Aorta (tissue), 5 donors: ENCODE measurements at regions of chr16 and their contacts with region 1.

Region 1: GRCh38 chr16:66608241-66609138 is 4.0 kb downstream of the CMTM3 start:
- DNase-seq: peak; percentile 90 to 96
- ATAC-seq: peak; percentile 69
- H3K4me3 ChIP-seq: no peak overlapping the region
- H3K27ac ChIP-seq: no peak overlapping the region
- H3K4me1 ChIP-seq: no peaks in the 10 kb centered on the region
- H3K27me3 ChIP-seq: no peaks in the 10 kb centered on the region

Region 2: GRCh38 chr16:66366433-66367299 is 241.8 kb before region 1 on chr16 and contains the start of gene CDH5:
- intact Hi-C with region 1: no loop called
- DNase-seq: peak in 1 of 2 donors; percentile 82
- ATAC-seq: peak; percentile 79
- H3K4me3 ChIP-seq: no peak within 1 kb of the TSS
- H3K27ac ChIP-seq: no peak within 1 kb of the TSS
- H3K4me1 ChIP-seq: no peaks in the 10 kb centered on the region
- H3K27me3 ChIP-seq: no peaks in the 10 kb centered on the region
- total RNA-seq, gene CDH5: 38.2 to 97.5 TPM

Region 3: DNA sequence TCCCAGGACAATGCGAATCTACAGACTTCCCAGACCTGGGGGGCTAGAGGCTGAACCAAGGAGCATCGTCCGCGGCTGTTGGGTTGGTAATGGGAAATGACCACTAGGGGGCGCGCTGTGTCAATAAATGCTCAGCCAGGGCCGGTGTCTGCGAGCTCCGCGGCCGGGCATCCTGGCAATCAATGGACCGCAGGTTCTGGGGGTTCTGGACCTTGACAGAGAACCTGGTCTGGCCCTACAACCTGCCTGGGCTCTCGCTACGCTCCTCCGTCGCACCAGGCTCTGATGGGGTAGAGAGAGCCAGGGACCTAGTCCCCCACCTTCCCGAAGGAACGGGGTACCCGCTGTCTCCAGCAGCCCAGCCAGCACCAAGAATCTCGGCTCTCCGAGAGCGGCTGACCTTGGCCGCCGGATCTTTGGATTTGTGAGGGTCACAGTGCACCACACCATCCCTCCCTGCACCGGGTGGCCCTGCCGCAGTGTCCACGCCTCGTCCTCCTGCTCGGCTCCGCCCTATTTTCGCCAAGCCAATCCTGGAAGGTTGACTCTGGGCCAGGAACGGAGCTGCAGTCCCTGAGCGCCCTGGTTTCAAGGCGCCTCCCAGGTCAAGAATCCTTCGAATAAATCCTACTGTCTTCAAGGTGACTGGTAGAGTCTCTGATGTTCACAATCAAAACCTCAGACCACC is 201.8 kb before region 1 on chr16:
- intact Hi-C with region 1: loop called (anchors 5 kb)
- DNase-seq: peak; percentile 89 to 96
- ATAC-seq: peak; percentile 94
- H3K4me3 ChIP-seq: peak overlapping the region in 1 of 2 donors; percentile 45
- H3K27ac ChIP-seq: no peak overlapping the region
- H3K4me1 ChIP-seq: no peaks in the 10 kb centered on the region
- H3K27me3 ChIP-seq: no peaks in the 10 kb centered on the region

Region 4: DNA sequence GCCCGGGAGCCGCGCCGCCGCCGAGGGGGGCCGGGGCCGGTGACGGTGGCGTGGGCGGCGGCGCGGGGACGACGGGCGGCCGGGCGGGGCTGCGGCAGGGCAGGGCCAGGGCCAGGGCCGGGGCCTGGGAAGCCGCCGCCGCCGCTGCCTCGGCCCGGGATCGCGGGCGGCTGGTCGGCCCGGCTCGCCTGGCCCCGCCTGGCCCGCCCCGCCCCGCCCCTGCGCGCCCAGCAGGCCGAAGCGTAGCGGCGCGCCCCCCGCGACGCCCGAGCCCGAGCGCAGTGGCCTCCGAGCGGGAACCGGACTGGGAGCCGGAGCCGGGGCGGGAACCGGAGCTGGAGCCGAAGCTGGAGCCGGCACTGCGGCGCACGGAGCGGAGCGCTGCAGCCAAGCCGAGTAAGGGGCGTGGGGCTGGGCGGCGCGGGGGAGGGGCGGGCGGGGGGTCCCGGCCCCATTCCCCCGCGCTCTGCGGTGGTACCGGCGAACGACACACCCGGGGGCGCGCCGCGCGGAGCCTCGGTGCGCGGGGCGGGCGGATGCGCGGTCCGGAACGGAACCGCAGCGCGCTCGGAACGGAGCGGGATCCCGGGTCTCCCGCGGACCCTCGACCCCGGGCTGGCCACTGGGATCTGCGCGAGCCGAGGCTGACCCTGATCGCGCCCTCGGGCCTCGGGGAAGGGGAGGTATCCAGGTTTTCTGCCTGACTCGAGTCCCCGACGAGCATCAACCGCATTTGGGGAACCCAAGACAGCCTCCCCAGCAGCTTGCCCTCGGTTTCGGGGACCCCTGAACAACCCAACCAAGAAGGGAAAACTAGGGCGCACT is 181.2 kb before region 1 on chr16 and contains the start of gene BEAN1:
- intact Hi-C with region 1: no loop called
- DNase-seq: no peak
- ATAC-seq: peak; percentile 13
- H3K4me3 ChIP-seq: peak within 1 kb of the TSS; percentile 55 to 65
- H3K27ac ChIP-seq: no peak within 1 kb of the TSS
- H3K4me1 ChIP-seq: no peaks in the 10 kb centered on the region
- H3K27me3 ChIP-seq: no peaks in the 10 kb centered on the region
- total RNA-seq, gene BEAN1: 0.16 to 1.8 TPM

Region 5: GRCh38 chr16:66483689-66484481 is 124.6 kb before region 1 on chr16:
- intact Hi-C with region 1: loop called (anchors 5 kb)
- DNase-seq: peak; percentile 88 to 92
- ATAC-seq: peak; percentile 75
- H3K4me3 ChIP-seq: no peak overlapping the region
- H3K27ac ChIP-seq: no peak overlapping the region
- H3K4me1 ChIP-seq: no peaks in the 10 kb centered on the region
- H3K27me3 ChIP-seq: no peaks in the 10 kb centered on the region

Region 6: GRCh38 chr16:66552286-66553177 is 56.0 kb before region 1 on chr16 and contains the start of gene CKLF:
- intact Hi-C with region 1: loop called in 1 of 2 experiments (anchors 1 kb)
- DNase-seq: peak; percentile 93 to 97
- ATAC-seq: peak; percentile 93
- H3K4me3 ChIP-seq: peak within 1 kb of the TSS; percentile 62 to 64
- H3K27ac ChIP-seq: peak within 1 kb of the TSS in 1 of 2 donors; percentile 92
- H3K4me1 ChIP-seq: peaks cover 3 to 5% of the 10 kb centered on the region in 2 donors
- H3K27me3 ChIP-seq: no peaks in the 10 kb centered on the region
- total RNA-seq, gene CKLF: 23.4 to 44.4 TPM

Region 7: DNA sequence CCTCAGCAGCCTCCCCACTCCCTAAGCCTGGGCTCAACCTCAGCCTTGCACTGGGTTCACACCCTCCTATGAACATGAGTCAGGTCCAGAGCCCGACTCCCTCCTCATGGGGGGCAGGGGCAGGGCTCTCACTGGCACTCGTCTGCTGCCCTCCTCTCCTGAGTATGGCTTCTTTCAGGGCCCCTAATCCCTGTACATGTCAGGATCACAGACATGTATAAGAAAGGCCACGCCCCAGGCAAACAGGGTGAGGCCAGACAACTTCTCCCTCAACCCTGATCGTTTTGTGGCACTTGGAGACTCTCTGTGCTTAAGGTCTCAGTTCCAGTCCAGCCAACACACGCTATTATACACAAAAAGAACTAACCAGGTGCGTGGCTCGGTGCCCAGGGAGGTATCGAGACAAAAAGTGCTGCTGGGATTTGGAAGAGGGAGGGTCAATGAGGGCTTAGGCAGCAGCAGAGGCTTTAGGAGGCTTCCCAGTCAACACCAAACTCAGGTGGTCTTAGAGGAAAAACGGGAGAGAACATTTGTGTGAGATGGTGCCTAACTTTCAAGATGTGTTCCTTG is 41.2 kb after region 1 on chr16:
- intact Hi-C with region 1: loop called in 1 of 2 experiments (anchors 2 kb)
- DNase-seq: no peak
- ATAC-seq: no peak
- H3K4me3 ChIP-seq: no peak overlapping the region
- H3K27ac ChIP-seq: no peak overlapping the region
- H3K4me1 ChIP-seq: no peaks in the 10 kb centered on the region
- H3K27me3 ChIP-seq: no peaks in the 10 kb centered on the region

Region 8: GRCh38 chr16:66677179-66677578 is 68.7 kb after region 1 on chr16:
- intact Hi-C with region 1: no loop called
- DNase-seq: no peak
- ATAC-seq: no peak
- H3K4me3 ChIP-seq: no peak overlapping the region
- H3K27ac ChIP-seq: no peak overlapping the region
- H3K4me1 ChIP-seq: no peaks in the 10 kb centered on the region
- H3K27me3 ChIP-seq: no peaks in the 10 kb centered on the region

Region 9: GRCh38 chr16:66751303-66751991 is 143.0 kb after region 1 on chr16 and contains the start of gene DYNC1LI2:
- intact Hi-C with region 1: loop called in 1 of 2 experiments (anchors 5 kb)
- DNase-seq: peak; percentile 89 to 94
- ATAC-seq: peak; percentile 95
- H3K4me3 ChIP-seq: peak within 1 kb of the TSS; percentile 77 to 92
- H3K27ac ChIP-seq: peak within 1 kb of the TSS in 1 of 2 donors; percentile 90
- H3K4me1 ChIP-seq: peaks cover 0 to 4% of the 10 kb centered on the region in 2 donors
- H3K27me3 ChIP-seq: no peaks in the 10 kb centered on the region
- total RNA-seq, gene DYNC1LI2: 166 to 169 TPM

Region 10: GRCh38 chr16:66872559-66872942 is 264.1 kb after region 1 on chr16:
- intact Hi-C with region 1: loop called (anchors 2 to 5 kb)
- DNase-seq: no peak
- ATAC-seq: no peak
- H3K4me3 ChIP-seq: no peak overlapping the region
- H3K27ac ChIP-seq: no peak overlapping the region
- H3K4me1 ChIP-seq: no peaks in the 10 kb centered on the region
- H3K27me3 ChIP-seq: no peaks in the 10 kb centered on the region